Activated CD4-positive, alpha-beta T cell treated with anti-CD3 and anti-CD28 coated beads, Interleukin-2, amount 10 ng/mL, durations not matched to agents 24 days and 14 days (primary cell): ENCODE measurements at regions of chr1 and their contacts with region 1.

Region 1: DNA sequence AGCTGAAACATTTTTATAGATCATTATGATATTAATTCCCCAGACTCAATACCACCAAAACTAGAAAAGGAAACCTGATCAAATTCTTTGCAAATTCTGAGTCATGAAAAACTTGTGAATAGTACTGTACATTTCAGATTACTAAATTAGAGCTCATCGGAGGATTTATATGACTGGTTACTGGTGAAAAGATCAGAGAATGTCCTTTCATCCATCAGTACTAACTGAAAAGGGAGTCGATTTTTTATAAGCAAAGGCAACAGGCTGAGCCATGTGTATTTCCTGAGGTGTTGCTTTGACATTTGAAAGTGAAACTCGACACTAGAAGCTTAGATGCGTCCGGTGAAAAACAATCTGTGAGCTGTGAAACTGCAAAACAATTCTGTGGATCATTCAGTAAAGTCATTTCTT is 155.7 kb downstream of the TNFSF18 start:
- DNase-seq: peak; percentile 82
- H3K4me3 Mint-ChIP-seq: peak overlapping the region; percentile 72
- H3K27ac Mint-ChIP-seq: peak overlapping the region; percentile 14
- H3K4me1 Mint-ChIP-seq: peaks cover 38% of the 10 kb centered on the region
- H3K27me3 Mint-ChIP-seq: peaks cover 38% of the 10 kb centered on the region

Region 2: DNA sequence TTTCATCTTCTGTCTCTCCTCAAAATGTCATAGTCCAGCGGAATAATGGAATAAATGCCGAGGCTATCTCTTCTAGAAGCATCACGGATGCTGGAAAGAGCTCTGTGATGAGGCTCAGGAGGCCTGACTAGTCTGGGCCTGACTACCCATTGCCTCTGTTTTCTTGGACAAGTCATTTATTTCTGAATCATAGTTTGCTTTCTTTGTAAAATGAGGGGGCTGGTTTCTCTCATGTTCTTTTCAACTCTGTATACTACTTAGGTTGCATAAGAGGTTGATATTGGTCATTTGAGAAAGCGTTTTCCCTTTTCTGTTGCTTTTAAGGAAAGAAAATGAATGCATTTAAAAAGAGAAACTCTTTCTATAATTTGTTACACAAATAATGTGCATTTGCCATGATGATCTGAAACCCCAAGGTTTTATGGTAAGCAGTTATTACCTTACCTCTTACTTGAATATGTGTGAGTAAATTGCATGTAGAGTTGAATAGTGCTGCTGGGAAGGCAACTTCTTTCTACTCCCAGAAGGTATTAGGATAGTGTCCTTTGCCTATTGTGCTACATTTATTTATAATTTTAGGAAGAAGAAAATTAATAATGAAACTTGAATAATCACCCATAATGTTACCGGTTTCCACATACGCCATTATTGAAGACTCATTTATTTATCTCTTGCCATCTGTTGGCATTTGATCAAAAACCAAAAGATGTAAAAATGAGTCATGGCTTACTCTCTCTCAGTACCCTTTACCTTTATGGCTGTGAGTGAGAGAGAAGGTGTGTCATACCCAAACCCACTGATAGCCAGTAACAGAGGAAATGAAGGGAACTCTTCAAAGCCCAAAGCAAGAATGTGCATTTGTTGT is 57.0 kb before region 1 on chr1:
- intact Hi-C with region 1: loop called (anchors 1 kb)
- DNase-seq: peak; percentile 79
- H3K4me3 Mint-ChIP-seq: no peak overlapping the region
- H3K27ac Mint-ChIP-seq: peak overlapping the region; percentile 38
- H3K4me1 Mint-ChIP-seq: peaks cover 28% of the 10 kb centered on the region
- H3K27me3 Mint-ChIP-seq: peaks cover 54% of the 10 kb centered on the region

Region 3: GRCh38 chr1:172883107-172883791 is 11.8 kb before region 1 on chr1:
- intact Hi-C with region 1: loop called (anchors 1 kb)
- DNase-seq: peak; percentile 58
- H3K4me3 Mint-ChIP-seq: peak overlapping the region; percentile 26
- H3K27ac Mint-ChIP-seq: peak overlapping the region; percentile 43
- H3K4me1 Mint-ChIP-seq: peaks cover 15% of the 10 kb centered on the region
- H3K27me3 Mint-ChIP-seq: peaks cover 71% of the 10 kb centered on the region

Region 4: GRCh38 chr1:172966844-172967540 is 71.9 kb after region 1 on chr1:
- intact Hi-C with region 1: loop called (anchors 2 kb)
- DNase-seq: no peak
- H3K4me3 Mint-ChIP-seq: no peak overlapping the region
- H3K27ac Mint-ChIP-seq: no peak overlapping the region
- H3K4me1 Mint-ChIP-seq: peaks cover 8% of the 10 kb centered on the region
- H3K27me3 Mint-ChIP-seq: peaks cover 28% of the 10 kb centered on the region

Region 5: DNA sequence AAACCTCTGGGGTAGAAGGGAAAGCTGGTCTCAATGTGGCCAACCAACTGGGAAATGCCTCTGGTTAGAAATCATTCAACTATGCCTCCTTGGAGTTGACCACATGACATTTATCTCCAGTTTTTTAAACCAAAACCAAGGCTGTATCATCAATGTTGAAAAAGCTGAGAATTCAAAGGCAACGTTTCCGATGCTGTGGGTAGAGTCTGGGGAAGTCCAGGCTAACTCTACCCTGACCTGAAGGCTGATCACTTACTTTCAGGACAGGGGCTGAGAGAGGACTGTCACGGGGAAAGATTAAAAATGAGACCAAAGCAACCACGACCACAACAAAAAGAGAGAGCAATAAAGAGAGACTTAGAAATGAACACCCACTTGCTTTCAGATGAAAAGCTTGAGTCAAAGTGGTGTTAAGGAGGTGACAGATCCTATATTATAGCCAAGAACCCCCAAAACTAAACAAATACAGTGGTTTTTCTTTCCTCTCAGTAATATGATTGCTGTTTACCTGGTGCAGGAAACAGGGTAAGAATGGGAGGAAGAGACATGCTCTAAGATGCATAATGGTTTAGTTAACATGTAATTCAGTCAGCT is 402.8 kb after region 1 on chr1:
- intact Hi-C with region 1: loop called (anchors 2 kb)
- DNase-seq: peak; percentile 68
- H3K4me3 Mint-ChIP-seq: no peak overlapping the region
- H3K27ac Mint-ChIP-seq: peak overlapping the region; percentile 51
- H3K4me1 Mint-ChIP-seq: peaks cover 20% of the 10 kb centered on the region
- H3K27me3 Mint-ChIP-seq: peaks cover 22% of the 10 kb centered on the region